SK-N-SH (cell line): ENCODE measurements at regions of chr1 and their contacts with region 1.

Region 1: GRCh38 chr1:109643385-109644230 is 12.3 kb upstream of the GSTM4 start:
- DNase-seq: peak; percentile 49
- H3K4me3 ChIP-seq: no peak overlapping the region
- H3K27ac ChIP-seq: peak overlapping the region in 1 of 2 experiments; percentile 29; a peak in 1 of 4 replicates
- H3K4me1 ChIP-seq: peaks cover 0 to 41% of the 10 kb centered on the region in 2 experiments; a peak in 2 of 4 replicates
- H3K27me3 ChIP-seq: no peaks in the 10 kb centered on the region
- CTCF ChIP-seq: peak; percentile 70
- EP300 ChIP-seq: no peak
- RAD21 ChIP-seq: peak; percentile 43

Region 2: DNA sequence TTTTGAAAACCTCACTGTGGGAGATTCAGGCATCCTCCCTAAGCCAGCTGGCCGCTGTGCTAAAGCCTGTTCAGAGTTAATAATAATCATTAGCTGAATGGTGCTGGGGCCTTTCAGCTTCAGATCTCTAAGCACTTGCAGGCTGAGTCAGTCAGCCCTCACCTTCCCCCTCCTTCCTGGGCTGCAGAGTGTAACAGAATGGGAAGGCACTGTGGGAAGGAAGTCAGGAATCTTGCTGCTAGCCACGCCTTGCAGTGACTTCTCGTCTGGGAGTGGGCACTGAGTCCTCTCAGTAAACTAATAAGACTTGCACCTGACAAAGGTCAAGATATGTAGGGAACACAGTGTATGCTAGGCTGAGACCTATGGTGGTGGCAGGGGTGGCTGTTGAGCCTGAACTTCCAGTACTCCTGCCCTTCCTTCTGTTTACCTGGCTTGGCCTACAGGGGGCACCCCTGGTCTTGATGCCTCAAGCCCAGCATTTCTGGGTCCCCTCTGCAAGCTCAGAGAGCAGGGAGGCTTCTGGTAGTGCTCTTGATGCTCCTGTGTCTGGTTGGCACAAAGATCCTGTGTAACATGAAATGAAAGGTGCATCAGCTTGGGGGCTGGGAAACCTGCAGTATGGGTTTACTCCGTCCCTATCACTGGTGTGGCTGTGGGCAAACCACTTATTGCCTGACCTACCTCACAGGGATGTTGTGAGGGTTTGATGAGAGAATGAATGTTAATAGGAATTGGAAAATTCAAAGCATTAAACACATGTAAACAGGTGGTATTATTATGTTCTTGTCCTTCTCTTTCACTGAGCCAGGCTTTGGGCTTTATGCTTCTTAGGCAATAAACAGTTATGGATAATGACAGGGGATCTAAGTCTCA is 143.7 kb before region 1 on chr1:
- CTCF ChIA-PET with region 1: interaction called, 18 read pairs
- POLR2A ChIA-PET with region 1: no interaction called
- DNase-seq: peak; percentile 42
- H3K4me3 ChIP-seq: no peak overlapping the region
- H3K27ac ChIP-seq: no peak overlapping the region; a peak in 1 of 4 replicates
- H3K4me1 ChIP-seq: peaks cover 0 to 17% of the 10 kb centered on the region in 2 experiments; a peak in 1 of 4 replicates
- H3K27me3 ChIP-seq: no peaks in the 10 kb centered on the region
- CTCF ChIP-seq: peak; percentile 55
- EP300 ChIP-seq: no peak
- RAD21 ChIP-seq: peak; percentile 24; the same call in 1 of the 2 replicates

Region 3: GRCh38 chr1:109539676-109540075 is 103.9 kb before region 1 on chr1 and contains the start of gene GPR61:
- CTCF ChIA-PET with region 1: interaction called, 297 read pairs
- POLR2A ChIA-PET with region 1: no interaction called
- DNase-seq: no peak
- H3K4me3 ChIP-seq: no peak within 1 kb of the TSS
- H3K27ac ChIP-seq: no peak within 1 kb of the TSS
- H3K4me1 ChIP-seq: peaks cover 0 to 25% of the 10 kb centered on the region in 2 experiments; a peak in 1 of 4 replicates
- H3K27me3 ChIP-seq: no peaks in the 10 kb centered on the region
- CTCF ChIP-seq: no peak
- EP300 ChIP-seq: no peak
- RAD21 ChIP-seq: no peak
- polyA plus RNA-seq, gene GPR61: not detected in 2 replicates

Region 4: DNA sequence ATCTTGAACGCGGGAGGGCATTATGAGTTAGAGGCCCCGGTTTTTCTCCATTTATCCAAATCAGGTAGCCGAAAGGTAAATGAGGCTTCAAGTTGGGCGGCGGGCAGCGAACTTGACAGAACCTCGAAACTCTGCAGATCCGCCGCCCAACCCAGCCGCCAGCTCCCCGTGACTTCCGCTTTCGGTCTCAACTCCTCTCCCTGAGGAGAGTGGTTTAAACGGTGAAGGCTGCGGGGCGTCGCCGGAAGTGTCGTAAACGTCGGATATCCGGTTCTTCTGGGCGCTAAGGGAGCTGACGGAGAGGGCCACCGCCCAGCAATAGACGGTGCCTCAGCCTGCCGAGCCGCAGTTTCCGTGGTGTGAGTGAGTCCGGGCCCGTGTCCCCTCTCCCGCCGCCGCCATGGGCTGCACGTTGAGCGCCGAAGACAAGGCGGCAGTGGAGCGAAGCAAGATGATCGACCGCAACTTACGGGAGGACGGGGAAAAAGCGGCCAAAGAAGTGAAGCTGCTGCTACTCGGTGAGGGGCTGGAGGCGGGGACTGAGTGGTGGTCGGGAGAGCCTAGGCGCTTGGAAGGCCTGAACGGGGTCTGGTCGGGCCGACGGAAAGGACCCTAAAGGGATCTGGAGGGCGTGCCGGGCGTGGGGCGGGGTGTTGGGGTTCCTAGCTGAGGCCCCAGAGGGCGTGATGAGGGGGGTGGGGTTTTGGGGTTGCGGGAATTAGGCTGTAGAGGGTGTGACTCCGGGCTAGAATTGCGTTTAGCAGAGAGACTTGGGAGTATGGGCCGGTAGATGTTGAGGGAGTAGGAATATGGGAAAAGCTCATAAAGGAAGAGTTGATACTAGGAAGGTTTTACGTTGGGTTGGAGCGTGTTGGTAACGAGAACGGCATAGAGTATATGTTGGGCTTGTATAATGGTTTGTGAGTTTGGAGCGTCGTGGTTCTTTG is 95.0 kb before region 1 on chr1 and contains the start of gene GNAI3:
- CTCF ChIA-PET with region 1: interaction called, 297 read pairs
- POLR2A ChIA-PET with region 1: interaction called, 44 read pairs
- DNase-seq: peak; percentile 90
- H3K4me3 ChIP-seq: peak within 1 kb of the TSS; percentile 80 to 88
- H3K27ac ChIP-seq: peak within 1 kb of the TSS; percentile 88 to 93
- H3K4me1 ChIP-seq: peaks cover 3 to 20% of the 10 kb centered on the region in 2 experiments; a peak in 3 of 4 replicates
- H3K27me3 ChIP-seq: no peaks in the 10 kb centered on the region
- CTCF ChIP-seq: no peak
- EP300 ChIP-seq: peak in 1 of 2 experiments; percentile 33; a peak in 1 of 4 replicates
- RAD21 ChIP-seq: no peak; the same call in 1 of the 2 replicates
- polyA plus RNA-seq, gene GNAI3: 4.0 and 4.8 TPM in 2 replicates

Region 5: DNA sequence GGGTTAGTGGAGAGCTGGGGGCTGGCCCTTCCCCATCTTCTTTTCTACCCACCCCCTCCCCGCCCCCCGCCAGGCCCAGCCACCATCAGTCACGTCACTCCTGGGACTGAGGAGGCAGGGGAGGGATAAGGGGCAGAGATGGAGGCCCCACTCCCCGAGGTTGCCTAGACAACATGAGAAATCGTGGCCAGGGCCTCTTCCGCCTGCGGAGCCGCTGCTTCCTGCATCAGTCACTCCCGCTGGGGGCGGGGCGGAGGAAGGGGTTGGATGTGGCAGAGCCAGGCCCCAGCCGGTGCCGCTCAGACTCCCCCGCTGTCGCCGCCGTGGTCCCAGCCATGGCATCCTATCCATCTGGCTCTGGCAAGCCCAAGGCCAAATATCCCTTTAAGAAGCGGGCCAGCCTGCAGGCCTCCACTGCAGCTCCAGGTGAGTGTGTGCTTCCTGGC is 22.7 kb before region 1 on chr1:
- CTCF ChIA-PET with region 1: interaction called, 114 read pairs
- POLR2A ChIA-PET with region 1: interaction called, 7 read pairs
- DNase-seq: peak; percentile 95
- H3K4me3 ChIP-seq: peak overlapping the region; percentile 85 to 98
- H3K27ac ChIP-seq: peak overlapping the region; percentile 97 to 98
- H3K4me1 ChIP-seq: peaks cover 28 to 60% of the 10 kb centered on the region in 2 experiments; a peak in 3 of 4 replicates
- H3K27me3 ChIP-seq: no peaks in the 10 kb centered on the region
- CTCF ChIP-seq: no peak
- EP300 ChIP-seq: no peak
- RAD21 ChIP-seq: no peak

Region 6: DNA sequence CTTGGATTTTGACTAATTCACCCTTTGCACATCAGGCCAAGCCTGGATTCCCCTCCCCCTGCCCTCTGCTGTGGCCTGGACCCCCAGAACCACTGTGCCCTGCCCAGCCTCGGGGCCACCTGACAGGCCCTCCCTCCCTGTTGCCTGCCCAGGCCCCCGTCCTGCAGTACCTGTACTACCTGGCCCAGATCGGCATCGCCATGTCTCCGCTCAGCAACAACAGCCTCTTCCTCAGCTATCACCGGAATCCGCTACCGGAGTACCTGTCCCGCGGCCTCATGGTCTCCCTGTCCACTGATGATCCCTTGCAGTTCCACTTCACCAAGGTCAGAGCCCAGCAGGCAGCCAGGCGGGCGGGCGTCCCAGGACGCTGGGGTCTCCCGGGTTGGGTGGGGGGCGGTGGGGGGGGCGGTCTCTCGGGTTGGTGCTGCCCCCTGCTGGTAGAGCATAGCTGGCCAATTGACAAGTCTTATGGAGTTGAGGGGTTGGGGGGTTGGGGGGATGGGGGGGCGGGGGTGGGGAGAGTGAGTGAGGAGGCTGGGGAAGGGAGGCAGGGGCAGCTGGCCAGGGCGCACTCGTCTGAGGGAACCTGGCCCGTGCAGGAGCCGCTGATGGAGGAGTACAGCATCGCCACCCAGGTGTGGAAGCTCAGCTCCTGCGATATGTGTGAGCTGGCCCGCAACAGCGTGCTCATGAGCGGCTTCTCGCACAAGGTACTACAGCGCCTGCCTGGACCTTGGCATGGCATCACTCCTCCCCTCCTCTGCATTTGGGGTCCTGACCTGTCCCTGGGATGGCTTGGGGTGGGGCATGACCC is 13.3 kb before region 1 on chr1:
- CTCF ChIA-PET with region 1: interaction called, 114 read pairs
- POLR2A ChIA-PET with region 1: interaction called, 8 read pairs
- DNase-seq: peak; percentile 84
- H3K4me3 ChIP-seq: no peak overlapping the region
- H3K27ac ChIP-seq: peak overlapping the region in 1 of 2 experiments; percentile 97; a peak in 2 of 4 replicates
- H3K4me1 ChIP-seq: peaks cover 0 to 46% of the 10 kb centered on the region in 2 experiments; a peak in 2 of 4 replicates
- H3K27me3 ChIP-seq: no peaks in the 10 kb centered on the region
- CTCF ChIP-seq: 0 out of 2 replicates have a peak, but pooled peaks have one; percentile 4
- EP300 ChIP-seq: no peak
- RAD21 ChIP-seq: no peak

Region 7: GRCh38 chr1:109655601-109656519 is 12.3 kb after region 1 on chr1 and contains the start of gene GSTM4:
- CTCF ChIA-PET with region 1: interaction called, 169 read pairs
- POLR2A ChIA-PET with region 1: interaction called, 4 read pairs
- DNase-seq: peak; percentile 89
- H3K4me3 ChIP-seq: peak within 1 kb of the TSS; percentile 69 to 72
- H3K27ac ChIP-seq: peak within 1 kb of the TSS; percentile 41 to 83; a peak in 3 of 4 replicates
- H3K4me1 ChIP-seq: peaks cover 12% of the 10 kb centered on the region in 2 experiments; a peak in 3 of 4 replicates
- H3K27me3 ChIP-seq: no peaks in the 10 kb centered on the region
- CTCF ChIP-seq: peak; percentile 20; the same call in 1 of the 2 replicates
- EP300 ChIP-seq: no peak
- RAD21 ChIP-seq: no peak
- polyA plus RNA-seq, gene GSTM4: 34.2 and 36.1 TPM in 2 replicates